Left cardiac atrium (tissue), 4 donors: ENCODE measurements at regions of chr18 and their contacts with region 1.

Region 1: GRCh38 chr18:26764628-26765027 is 100.9 kb downstream of the AQP4 start:
- DNase-seq: no peak
- ATAC-seq: no peak

Region 2: DNA sequence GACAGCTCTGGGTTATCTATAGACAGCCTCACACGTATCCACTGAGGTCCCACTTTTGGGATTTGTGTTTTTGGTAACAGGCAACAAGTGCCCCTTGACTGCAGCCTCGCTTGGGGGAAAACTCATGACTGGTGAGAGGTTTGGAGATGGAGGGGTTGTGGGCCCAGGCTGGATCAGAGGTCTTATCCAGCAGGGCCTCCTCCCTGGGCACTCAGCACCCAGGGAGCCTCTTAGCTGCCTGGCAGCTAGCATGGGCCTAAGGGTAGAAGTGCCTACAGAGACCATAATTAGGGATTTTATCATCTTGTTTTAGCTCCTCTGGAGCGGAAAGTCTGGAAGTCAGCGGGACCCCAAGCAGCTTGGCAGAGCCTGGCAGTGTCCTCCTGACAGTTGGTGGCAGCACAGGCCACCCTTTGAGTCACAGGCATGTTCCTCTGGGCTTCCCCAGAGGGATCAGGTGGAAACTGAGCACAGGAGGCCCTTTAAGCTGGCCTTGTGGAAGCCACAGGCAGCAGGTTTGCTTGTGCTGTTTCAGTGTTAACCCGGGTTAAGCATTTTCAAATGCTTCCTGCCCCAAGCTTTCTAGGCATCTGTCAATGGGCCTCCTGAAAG is 359.3 kb before region 1 on chr18:
- intact Hi-C with region 1: loop called (anchors 5 to 10 kb)
- DNase-seq: peak; percentile 41
- ATAC-seq: peak; percentile 87 to 90

Region 3: GRCh38 chr18:26621161-26622026 is 143.2 kb before region 1 on chr18:
- intact Hi-C with region 1: loop called in 1 of 2 experiments (anchors 5 kb)
- DNase-seq: peak; percentile 56
- ATAC-seq: peak; percentile 77 to 83